ENCODE measurements at regions of chr2 and their contacts with region 1.

Region 1: GRCh38 chr2:1742681-1743395 is 1.5 kb downstream of the PXDN start:
- DNase-seq: peak; percentile 91
- ATAC-seq: peak; percentile 62
- H3K4me3 ChIP-seq: peak overlapping the region; percentile 75
- H3K27ac ChIP-seq: peak overlapping the region; percentile 98
- H3K4me1 ChIP-seq: peaks cover 50% of the 10 kb centered on the region
- H3K27me3 ChIP-seq: no peaks in the 10 kb centered on the region
- CTCF ChIP-seq: peak; percentile 76

Region 2: GRCh38 chr2:1593371-1594290 is 149.2 kb before region 1 on chr2:
- CTCF ChIA-PET with region 1: no interaction called
- POLR2A ChIA-PET with region 1: no interaction called
- intact Hi-C with region 1: no loop called
- DNase-seq: peak; percentile 92
- ATAC-seq: peak; percentile 65
- H3K4me3 ChIP-seq: no peak overlapping the region
- H3K27ac ChIP-seq: peak overlapping the region; percentile 89
- H3K4me1 ChIP-seq: peaks cover 49% of the 10 kb centered on the region
- H3K27me3 ChIP-seq: no peaks in the 10 kb centered on the region
- CTCF ChIP-seq: no peak

Region 3: DNA sequence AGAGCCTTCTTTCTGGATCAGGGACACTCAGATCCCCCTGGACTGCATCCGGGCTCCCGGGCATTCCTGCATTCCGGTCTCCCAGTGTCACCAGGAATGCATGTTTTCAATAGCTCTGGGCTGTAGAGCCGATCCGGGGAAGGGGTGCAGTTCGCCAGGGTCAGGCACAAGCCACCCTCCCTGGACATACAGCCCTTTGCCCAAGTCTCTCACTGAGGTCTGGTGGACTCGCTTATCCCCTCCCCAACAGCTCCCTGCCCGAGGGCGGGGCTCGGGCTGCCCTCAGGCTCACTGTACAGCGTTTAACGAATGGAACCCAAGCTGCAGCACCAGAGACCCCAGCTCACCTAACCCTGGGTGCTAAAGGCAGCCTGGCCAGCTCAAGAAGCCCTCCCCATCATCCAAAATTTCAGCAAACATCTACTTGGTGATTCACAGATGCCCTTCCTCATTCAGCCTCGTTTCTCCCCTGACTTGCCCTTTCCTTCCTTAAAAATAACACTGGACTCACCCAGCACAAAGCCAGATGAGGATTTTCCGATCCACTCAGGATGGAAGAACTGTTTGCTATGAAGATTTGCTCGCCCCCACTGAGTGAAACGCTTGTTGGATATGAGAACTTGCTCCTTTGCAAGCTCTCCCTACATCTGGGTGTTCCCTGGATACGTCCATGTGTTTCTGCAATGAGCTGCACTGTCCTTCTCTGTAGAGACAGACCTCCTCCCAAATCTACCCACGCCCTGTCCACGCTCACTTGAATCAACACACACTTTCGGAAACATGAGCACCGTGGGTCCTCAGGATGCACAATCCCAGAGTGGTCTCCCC is 56.7 kb before region 1 on chr2:
- CTCF ChIA-PET with region 1: interaction called, 4 read pairs
- POLR2A ChIA-PET with region 1: no interaction called
- intact Hi-C with region 1: loop called (anchors 2 kb)
- DNase-seq: peak; percentile 91
- ATAC-seq: peak; percentile 58
- H3K4me3 ChIP-seq: 0 out of 2 replicates have a peak overlapping the region, but pooled peaks have one; percentile 3
- H3K27ac ChIP-seq: peak overlapping the region; percentile 98
- H3K4me1 ChIP-seq: peaks cover 36% of the 10 kb centered on the region
- H3K27me3 ChIP-seq: no peaks in the 10 kb centered on the region
- CTCF ChIP-seq: no peak

Region 4: GRCh38 chr2:1721706-1722646 is 20.9 kb before region 1 on chr2:
- CTCF ChIA-PET with region 1: no interaction called
- POLR2A ChIA-PET with region 1: no interaction called
- intact Hi-C with region 1: loop called (anchors 1 kb)
- DNase-seq: peak; percentile 87
- ATAC-seq: peak; percentile 60
- H3K4me3 ChIP-seq: peak overlapping the region; percentile 45; the same call in 1 of the 2 replicates
- H3K27ac ChIP-seq: peak overlapping the region; percentile 99
- H3K4me1 ChIP-seq: peaks cover 61% of the 10 kb centered on the region
- H3K27me3 ChIP-seq: no peaks in the 10 kb centered on the region
- CTCF ChIP-seq: no peak

Measured in PC-3 (cell line).